Caco-2 (cell line): ENCODE measurements at regions of chr1 and their contacts with region 1.

Region 1: DNA sequence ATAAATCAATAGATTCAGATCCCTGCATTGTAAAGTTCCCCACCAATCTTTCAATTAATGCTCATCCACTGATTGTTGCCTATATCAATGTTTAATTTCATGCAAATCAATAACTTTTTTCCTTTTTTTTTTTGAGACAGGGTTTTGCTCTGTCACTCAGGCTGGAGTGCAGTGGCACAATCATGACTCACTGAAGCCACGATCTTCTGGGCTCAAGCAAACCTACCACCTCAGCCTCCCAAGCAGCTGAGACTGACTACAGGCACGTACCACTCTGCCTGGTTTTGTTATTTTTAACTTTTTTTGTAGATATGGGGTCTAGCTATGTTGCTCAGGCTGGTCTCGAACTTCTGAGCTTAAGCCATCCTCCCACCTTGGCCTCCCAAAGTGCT is 25.7 kb downstream of the DIO1 start:
- DNase-seq: no peak
- H3K4me3 ChIP-seq: no peak overlapping the region
- H3K4me3 Mint-ChIP-seq: no peak overlapping the region
- H3K27ac Mint-ChIP-seq: no peak overlapping the region
- H3K4me1 ChIP-seq: peaks cover 8% of the 10 kb centered on the region; the same call in 1 of the 2 replicates
- H3K4me1 Mint-ChIP-seq: no peaks in the 10 kb centered on the region
- H3K27me3 ChIP-seq: no peaks in the 10 kb centered on the region
- H3K27me3 Mint-ChIP-seq: no peaks in the 10 kb centered on the region
- CTCF ChIP-seq: no peak

Region 2: GRCh38 chr1:53878492-53879105 is 41.1 kb before region 1 on chr1:
- CTCF ChIA-PET with region 1: interaction called, 4 read pairs
- POLR2A ChIA-PET with region 1: no interaction called
- intact Hi-C with region 1: loop called (anchors 1 kb)
- DNase-seq: peak in 1 of 2 experiments; percentile 49
- H3K4me3 ChIP-seq: no peak overlapping the region
- H3K4me3 Mint-ChIP-seq: no peak overlapping the region
- H3K27ac Mint-ChIP-seq: no peak overlapping the region
- H3K4me1 ChIP-seq: no peaks in the 10 kb centered on the region
- H3K4me1 Mint-ChIP-seq: no peaks in the 10 kb centered on the region
- H3K27me3 ChIP-seq: no peaks in the 10 kb centered on the region
- H3K27me3 Mint-ChIP-seq: no peaks in the 10 kb centered on the region
- CTCF ChIP-seq: peak; percentile 41 to 44

Region 3: DNA sequence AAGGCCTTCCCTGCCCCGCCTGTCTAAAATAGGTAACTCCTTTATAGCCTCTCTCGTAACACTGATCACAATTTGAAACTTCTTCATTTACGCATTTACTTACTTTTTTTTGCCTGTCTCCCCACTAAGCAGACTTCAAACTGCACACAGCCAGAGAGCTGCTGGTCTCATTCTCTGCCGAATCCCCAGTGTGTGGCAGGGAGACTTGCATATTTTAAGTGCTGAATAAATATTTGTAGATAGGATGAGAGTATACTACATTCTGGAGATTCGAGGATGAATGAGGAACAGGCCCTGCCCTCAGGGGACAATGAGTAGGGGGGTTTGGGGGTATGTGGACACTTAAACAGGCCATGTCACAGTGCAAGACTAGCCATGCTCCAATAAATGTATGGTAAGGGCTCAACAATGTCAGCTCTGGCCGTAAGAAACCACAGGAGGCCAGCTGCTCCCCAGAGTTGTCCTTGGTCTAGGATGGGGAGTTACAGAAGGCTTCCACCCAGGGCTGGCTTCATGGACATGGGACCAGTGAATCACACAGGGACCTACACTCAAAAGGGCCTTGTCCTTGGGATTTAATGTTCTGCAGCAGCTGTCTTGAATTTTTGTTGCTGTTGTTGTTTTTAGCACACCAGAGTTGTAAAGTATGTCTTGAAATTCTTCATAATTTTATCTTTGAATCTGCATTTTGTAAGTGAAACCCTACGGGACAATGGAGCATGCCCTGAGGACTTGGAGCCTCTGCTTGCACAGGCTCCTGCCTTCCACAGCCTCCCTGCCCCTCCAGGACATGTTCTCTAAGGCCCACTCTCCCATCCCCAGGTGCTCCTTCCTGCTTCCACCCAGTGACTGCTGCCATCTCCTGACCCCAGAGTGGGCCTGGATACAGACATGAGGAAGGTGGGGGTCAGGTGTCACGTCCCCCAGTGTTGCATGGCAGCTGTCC is 17.2 kb before region 1 on chr1:
- CTCF ChIA-PET with region 1: no interaction called
- POLR2A ChIA-PET with region 1: no interaction called
- intact Hi-C with region 1: loop called (anchors 2 kb)
- DNase-seq: peak; percentile 37 to 51
- H3K4me3 ChIP-seq: no peak overlapping the region
- H3K4me3 Mint-ChIP-seq: peak overlapping the region; percentile 45
- H3K27ac Mint-ChIP-seq: peak overlapping the region; percentile 77
- H3K4me1 ChIP-seq: peaks cover 34% of the 10 kb centered on the region
- H3K4me1 Mint-ChIP-seq: peaks cover 20% of the 10 kb centered on the region
- H3K27me3 ChIP-seq: no peaks in the 10 kb centered on the region
- H3K27me3 Mint-ChIP-seq: no peaks in the 10 kb centered on the region
- CTCF ChIP-seq: no peak